Heart right ventricle (tissue), 16 donors: ENCODE measurements at regions of chr1 and their contacts with region 1.

Region 1: DNA sequence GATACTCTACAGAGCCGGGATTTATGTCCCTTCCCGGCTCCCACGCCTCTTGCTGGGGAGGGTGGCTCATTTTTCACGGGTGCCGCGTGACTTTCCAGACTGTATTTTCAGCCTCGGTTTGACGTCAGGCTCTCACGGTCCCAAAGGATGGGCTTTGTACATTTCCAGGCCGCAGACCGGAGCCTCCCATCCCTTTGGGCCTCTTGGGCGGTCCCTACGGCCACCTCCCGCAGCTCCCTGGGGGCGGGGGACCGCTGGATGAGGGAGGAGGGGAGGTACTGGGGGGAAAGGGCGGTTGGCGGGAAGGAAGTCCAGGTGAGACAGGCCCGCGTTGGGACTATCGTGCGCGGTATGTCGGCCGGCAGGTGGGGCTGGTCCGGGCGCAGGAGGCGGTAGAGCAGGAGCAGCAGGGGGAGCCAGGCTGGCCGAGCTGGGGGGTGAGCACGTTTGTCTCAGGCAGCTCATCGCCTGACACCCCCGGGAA is 17.9 kb downstream of the UBL4B start:
- DNase-seq: peak in 1 of 2 donors; percentile 45
- ATAC-seq: peak; percentile 38 to 71 (median 58)
- H3K4me3 ChIP-seq: peak overlapping the region in 1 of 10 donors; percentile 17
- H3K27ac ChIP-seq: no peak overlapping the region
- H3K4me1 ChIP-seq: peaks cover 0 to 9% (median 4%) of the 10 kb centered on the region in 9 donors
- H3K27me3 ChIP-seq: peaks cover 0 to 47% (median 29%) of the 10 kb centered on the region in 7 donors
- CTCF ChIP-seq: peak in 6 of 9 donors; percentile 15 to 41 (median 29)

Region 2: GRCh38 chr1:110188035-110188618 is 58.0 kb after region 1 on chr1:
- intact Hi-C with region 1: loop called in 1 of 10 experiments (anchors 5 kb)
- DNase-seq: peak in 1 of 2 donors; percentile 61
- ATAC-seq: peak; percentile 38 to 88 (median 65)
- H3K4me3 ChIP-seq: no peak overlapping the region
- H3K27ac ChIP-seq: peak overlapping the region in 9 of 10 donors; percentile 32 to 92 (median 67)
- H3K4me1 ChIP-seq: peaks cover 0 to 59% (median 30%) of the 10 kb centered on the region in 9 donors
- H3K27me3 ChIP-seq: no peaks in the 10 kb centered on the region
- CTCF ChIP-seq: no peak